ENCODE measurements at regions of chr1 and their contacts with region 1.

Region 1: GRCh38 chr1:152189657-152190442 is 30.8 kb upstream of the RPTN start:
- DNase-seq: peak; percentile 50
- H3K4me3 ChIP-seq: peak overlapping the region in 1 of 4 donors; percentile 60
- H3K27ac ChIP-seq: peak overlapping the region in 1 of 4 donors; percentile 24
- H3K4me1 ChIP-seq: peaks cover 0 to 8% (median 4%) of the 10 kb centered on the region in 4 donors
- H3K27me3 ChIP-seq: peaks cover 6% of the 10 kb centered on the region
- CTCF ChIP-seq: peak; percentile 60 to 69 (median 64)
- EP300 ChIP-seq: no peak
- POLR2A ChIP-seq: no peak

Region 2: DNA sequence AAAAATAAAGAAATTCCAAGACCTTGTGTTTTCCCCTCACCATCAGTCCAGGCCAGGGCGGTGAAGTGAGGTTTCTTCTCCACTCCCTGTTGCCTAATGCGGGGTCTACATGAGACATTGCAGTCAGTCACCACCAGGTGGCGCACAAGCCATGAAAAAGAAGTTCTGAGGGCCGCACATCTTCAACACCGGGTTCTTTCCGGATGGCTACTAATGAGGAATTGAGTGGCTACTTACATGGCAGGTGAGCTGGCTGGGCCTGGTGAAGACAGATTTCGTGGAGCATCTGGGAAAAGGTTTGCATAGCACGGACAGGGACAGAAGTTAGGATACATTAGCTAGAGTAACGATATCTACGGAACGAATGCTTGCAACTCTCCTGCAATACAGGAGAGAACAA is 137.2 kb before region 1 on chr1:
- in situ Hi-C with region 1: loop called in 2 of 4 experiments (anchors 5 to 10 kb)
- intact Hi-C with region 1: no loop called
- DNase-seq: peak; percentile 88
- H3K4me3 ChIP-seq: no peak overlapping the region
- H3K27ac ChIP-seq: no peak overlapping the region
- H3K4me1 ChIP-seq: peaks cover 11 to 14% (median 13%) of the 10 kb centered on the region in 4 donors
- H3K27me3 ChIP-seq: peaks cover 45% of the 10 kb centered on the region
- CTCF ChIP-seq: peak; percentile 89 to 93 (median 91)
- EP300 ChIP-seq: no peak
- POLR2A ChIP-seq: no peak

Region 3: GRCh38 chr1:152127670-152128069 is 62.2 kb before region 1 on chr1:
- in situ Hi-C with region 1: loop called in 1 of 4 experiments (anchors 10 kb)
- intact Hi-C with region 1: no loop called
- DNase-seq: no peak
- H3K4me3 ChIP-seq: no peak overlapping the region
- H3K27ac ChIP-seq: no peak overlapping the region
- H3K4me1 ChIP-seq: no peaks in the 10 kb centered on the region
- H3K27me3 ChIP-seq: peaks cover 52% of the 10 kb centered on the region
- CTCF ChIP-seq: no peak
- EP300 ChIP-seq: no peak
- POLR2A ChIP-seq: no peak